ENCODE measurements at regions of chr4 and their contacts with region 1.

Region 1: DNA sequence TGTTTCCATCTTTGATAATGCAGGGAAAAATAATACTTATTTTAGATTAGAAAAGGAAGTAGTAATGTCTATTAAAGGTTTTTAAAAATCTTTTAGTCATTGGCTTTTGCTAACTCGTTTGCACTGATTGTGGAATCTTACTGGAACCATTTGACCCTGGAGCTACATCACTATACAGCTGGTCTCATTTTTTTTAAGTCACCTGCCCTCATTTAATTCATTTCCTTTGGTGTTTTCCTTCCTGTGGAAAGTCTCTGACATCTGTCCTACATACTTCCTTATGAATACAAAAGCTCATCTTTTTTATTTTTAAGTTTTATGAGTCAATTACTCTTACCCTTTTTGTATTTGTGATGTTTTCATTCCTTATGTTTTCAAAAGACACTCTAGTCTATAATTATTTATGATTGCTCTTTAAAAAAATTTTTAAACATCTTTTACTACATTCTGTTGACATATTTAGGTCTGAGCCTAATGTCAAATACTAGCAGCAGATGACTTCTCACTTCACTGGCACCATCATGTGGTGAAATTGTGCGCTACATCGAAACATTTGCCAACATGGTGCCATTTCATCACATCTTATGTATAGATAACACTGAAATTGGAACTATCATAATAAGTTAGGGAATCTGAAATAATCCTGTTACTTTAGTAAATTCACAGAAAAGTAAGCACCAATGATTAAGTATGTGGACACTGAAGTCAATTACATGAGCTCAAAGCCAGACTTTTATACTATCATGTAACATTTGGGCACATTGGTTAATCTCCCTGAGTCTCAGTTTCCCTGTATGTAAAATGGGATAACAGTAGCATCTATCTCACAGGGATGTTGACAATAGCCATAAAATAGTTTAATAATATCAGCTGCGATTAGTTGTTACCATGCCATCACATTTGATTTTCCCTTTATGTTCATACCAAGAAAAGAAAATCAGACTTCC is 9.4 kb upstream of the MMAA start:
- DNase-seq: peak; percentile 30
- CTCF ChIP-seq: peak; percentile 85

Region 2: GRCh38 chr4:145216535-145216934 is 393.2 kb before region 1 on chr4:
- CTCF ChIA-PET with region 1: interaction called, 11 read pairs
- POLR2A ChIA-PET with region 1: no interaction called
- DNase-seq: no peak
- CTCF ChIP-seq: peak; percentile 40

Region 3: DNA sequence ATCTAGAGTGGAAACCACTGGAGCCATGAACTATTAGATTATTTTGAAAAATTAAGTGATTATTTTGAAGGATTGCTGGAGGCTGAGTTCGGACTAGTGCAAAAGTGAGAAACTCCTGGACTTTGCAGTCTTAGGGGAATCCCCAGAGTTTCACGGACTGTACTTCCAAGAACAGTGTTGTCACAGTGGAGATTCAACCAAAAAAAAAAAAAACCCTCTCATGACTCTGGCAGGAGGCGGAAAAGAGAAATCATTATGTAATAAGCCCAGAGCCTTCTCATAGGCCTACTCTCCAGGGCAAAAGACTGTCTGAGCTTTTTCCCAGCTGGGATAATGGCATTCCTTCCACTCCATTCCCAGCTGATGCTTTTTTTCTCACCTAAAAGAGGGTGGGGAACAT is 53.4 kb after region 1 on chr4:
- CTCF ChIA-PET with region 1: no interaction called
- POLR2A ChIA-PET with region 1: no interaction called
- DNase-seq: no peak
- CTCF ChIP-seq: no peak